CD4-positive, alpha-beta memory T cell (primary cell): ENCODE measurements at regions of chr7 and their contacts with region 1.

Region 1: GRCh38 chr7:137898839-137899721 is 52.3 kb upstream of the DGKI start:
- DNase-seq: peak; percentile 58 to 74 (median 62)
- H3K4me3 ChIP-seq: no peak overlapping the region
- H3K4me3 Mint-ChIP-seq: peak overlapping the region in 7 of 8 donors; percentile 8 to 66 (median 43)
- H3K27ac ChIP-seq: no peak overlapping the region
- H3K27ac Mint-ChIP-seq: peak overlapping the region; percentile 36 to 81 (median 70)
- H3K4me1 ChIP-seq: peaks cover 9% of the 10 kb centered on the region
- H3K4me1 Mint-ChIP-seq: peaks cover 10 to 21% (median 17%) of the 10 kb centered on the region in 4 donors
- H3K27me3 ChIP-seq: no peaks in the 10 kb centered on the region
- H3K27me3 Mint-ChIP-seq: no peaks in the 10 kb centered on the region

Region 2: DNA sequence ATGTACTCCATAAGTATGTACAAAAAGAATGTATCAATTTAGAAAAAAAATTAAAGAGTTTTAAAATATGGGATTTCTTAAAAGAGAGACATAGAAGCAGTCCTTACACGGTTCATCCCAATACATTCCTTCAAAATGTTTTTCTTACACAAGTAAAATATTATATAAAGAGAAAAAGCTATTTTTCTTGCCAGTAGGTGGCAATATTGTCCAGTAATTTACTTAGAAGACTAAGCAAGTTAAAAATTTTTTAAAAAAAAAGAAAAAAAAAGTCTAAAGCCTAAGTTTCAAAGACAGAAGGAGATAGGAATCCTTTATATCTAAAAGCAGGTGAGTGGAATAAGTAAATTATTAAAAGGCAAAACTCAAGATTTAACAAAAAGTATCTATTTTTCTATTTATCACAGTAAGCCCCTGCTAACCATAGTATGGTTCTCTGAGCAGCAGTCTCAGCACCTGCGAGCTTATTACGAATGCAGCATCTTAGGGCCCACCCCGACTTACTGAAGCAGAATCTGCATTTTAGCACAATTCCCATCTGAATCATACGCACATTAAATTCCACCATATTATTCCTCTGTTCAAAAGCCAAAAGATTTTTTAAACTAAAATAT is 292.9 kb before region 1 on chr7:
- CTCF ChIA-PET with region 1: interaction called, 4 read pairs
- POLR2A ChIA-PET with region 1: no interaction called
- intact Hi-C with region 1: loop called (anchors 1 kb)
- DNase-seq: peak in 4 of 5 donors; percentile 7 to 11 (median 8)
- H3K4me3 ChIP-seq: no peak overlapping the region
- H3K4me3 Mint-ChIP-seq: no peak overlapping the region
- H3K27ac ChIP-seq: no peak overlapping the region
- H3K27ac Mint-ChIP-seq: no peak overlapping the region
- H3K4me1 ChIP-seq: no peaks in the 10 kb centered on the region
- H3K4me1 Mint-ChIP-seq: no peaks in the 10 kb centered on the region
- H3K27me3 ChIP-seq: no peaks in the 10 kb centered on the region
- H3K27me3 Mint-ChIP-seq: peaks cover 5% of the 10 kb centered on the region in 2 donors

Region 3: DNA sequence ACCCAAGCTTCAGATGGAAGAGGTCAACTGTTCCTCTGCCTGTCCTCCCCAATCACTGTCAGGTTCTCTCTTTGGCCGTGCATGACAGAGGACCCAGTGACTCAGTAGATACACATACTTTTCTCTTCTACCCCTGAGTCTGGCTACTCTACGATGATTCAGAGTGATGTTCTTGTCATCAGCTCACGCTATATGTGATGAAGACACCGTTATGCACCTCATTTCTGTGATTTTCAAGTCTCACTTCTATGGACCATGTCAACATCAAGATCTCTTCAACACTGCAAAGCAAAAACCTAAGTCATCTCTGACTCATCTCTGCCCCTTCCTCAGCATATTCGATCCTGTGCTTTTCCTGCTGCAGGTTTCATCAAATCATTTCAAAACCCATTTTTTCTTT is 24.3 kb after region 1 on chr7:
- CTCF ChIA-PET with region 1: interaction called, 19 read pairs
- POLR2A ChIA-PET with region 1: no interaction called
- intact Hi-C with region 1: no loop called
- DNase-seq: no peak
- H3K4me3 ChIP-seq: no peak overlapping the region
- H3K4me3 Mint-ChIP-seq: no peak overlapping the region
- H3K27ac ChIP-seq: no peak overlapping the region
- H3K27ac Mint-ChIP-seq: peak overlapping the region in 4 of 7 donors; percentile 1 to 39 (median 16)
- H3K4me1 ChIP-seq: peaks cover 21% of the 10 kb centered on the region
- H3K4me1 Mint-ChIP-seq: peaks cover 24 to 57% (median 35%) of the 10 kb centered on the region in 4 donors
- H3K27me3 ChIP-seq: no peaks in the 10 kb centered on the region
- H3K27me3 Mint-ChIP-seq: no peaks in the 10 kb centered on the region

Region 4: DNA sequence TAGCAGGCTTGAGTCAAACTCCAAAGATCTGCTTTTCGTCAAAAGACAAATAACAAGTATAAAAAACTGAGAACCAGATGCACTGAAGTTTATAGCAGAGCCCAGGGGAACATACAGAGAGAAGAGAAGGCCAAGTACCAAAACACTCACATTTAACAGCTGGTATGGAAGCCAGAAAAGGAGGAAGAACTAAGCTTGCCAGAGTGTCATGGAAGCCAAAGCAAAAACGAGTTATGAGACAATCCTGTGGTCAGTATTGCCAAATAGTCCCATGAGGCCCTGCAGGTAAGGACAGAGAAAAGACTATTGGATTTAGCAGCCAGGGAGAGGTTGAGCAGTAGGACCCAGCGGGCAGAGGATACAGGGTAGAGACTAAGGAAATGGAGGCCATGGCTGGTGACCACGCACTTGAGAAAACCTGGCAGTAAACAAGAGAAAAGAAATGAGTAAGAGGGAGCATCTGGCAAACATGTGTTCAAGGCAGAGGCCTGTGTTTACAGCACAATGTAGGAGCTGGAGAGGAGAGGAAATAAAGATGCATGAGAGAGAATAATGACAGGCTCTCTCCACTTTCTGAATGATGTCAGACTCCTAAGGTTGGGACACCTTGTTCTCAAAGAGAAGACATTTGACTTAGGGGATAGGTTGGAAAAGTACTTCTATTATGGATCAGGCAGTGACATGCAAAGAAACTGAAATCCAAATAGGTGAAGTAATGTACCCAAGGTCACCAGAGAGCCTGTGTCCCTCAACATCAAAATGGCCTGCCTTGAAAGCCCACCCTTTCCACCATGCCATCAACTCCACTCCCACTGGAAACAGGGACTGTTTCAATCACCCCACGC is 93.7 kb after region 1 on chr7:
- CTCF ChIA-PET with region 1: interaction called, 594 read pairs
- POLR2A ChIA-PET with region 1: no interaction called
- intact Hi-C with region 1: no loop called
- DNase-seq: no peak
- H3K4me3 ChIP-seq: no peak overlapping the region
- H3K4me3 Mint-ChIP-seq: peak overlapping the region in 6 of 8 donors; percentile 13 to 77 (median 46)
- H3K27ac ChIP-seq: no peak overlapping the region
- H3K27ac Mint-ChIP-seq: peak overlapping the region in 5 of 7 donors; percentile 5 to 54 (median 31)
- H3K4me1 ChIP-seq: peaks cover 28% of the 10 kb centered on the region
- H3K4me1 Mint-ChIP-seq: peaks cover 24 to 48% (median 36%) of the 10 kb centered on the region in 4 donors
- H3K27me3 ChIP-seq: no peaks in the 10 kb centered on the region
- H3K27me3 Mint-ChIP-seq: no peaks in the 10 kb centered on the region

Region 5: DNA sequence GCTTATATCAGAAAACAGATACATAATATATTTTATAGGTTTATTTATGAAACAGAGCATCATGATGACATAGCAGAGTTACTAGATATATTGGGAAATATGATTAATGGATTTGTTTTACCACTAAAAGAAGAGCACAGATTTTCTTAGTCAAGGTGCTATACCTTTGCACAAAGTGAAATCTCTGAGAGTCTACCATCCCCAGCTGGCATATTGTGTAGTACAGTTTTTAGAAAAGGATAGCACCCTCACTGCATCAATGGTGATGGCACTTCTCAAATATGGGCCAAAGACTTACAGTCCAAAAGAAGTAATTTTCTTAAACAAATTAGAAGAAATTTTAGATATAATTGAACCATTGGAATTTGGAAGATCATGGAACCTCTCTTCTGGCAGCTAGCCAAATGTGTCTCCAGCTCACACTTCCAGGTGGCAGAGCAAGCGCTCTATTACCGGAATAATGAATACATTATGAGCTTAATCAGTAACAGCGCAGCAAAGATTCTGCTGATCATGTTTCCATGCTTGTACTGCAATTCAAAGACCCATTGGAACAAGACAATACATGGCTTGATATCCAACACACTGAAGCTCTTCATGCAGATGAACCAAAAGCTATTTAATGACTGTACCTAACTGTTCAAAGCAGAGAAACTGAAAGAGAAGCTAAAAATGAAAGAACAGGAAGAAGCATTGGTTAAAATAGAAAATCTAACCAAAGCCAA is 124.7 kb after region 1 on chr7:
- CTCF ChIA-PET with region 1: interaction called, 108 read pairs
- POLR2A ChIA-PET with region 1: no interaction called
- intact Hi-C with region 1: no loop called
- DNase-seq: no peak
- H3K4me3 ChIP-seq: no peak overlapping the region
- H3K4me3 Mint-ChIP-seq: no peak overlapping the region
- H3K27ac ChIP-seq: no peak overlapping the region
- H3K27ac Mint-ChIP-seq: no peak overlapping the region
- H3K4me1 ChIP-seq: no peaks in the 10 kb centered on the region
- H3K4me1 Mint-ChIP-seq: peaks cover 0 to 2% (median 0%) of the 10 kb centered on the region in 4 donors
- H3K27me3 ChIP-seq: no peaks in the 10 kb centered on the region
- H3K27me3 Mint-ChIP-seq: peaks cover 0 to 4% of the 10 kb centered on the region in 2 donors

Region 6: DNA sequence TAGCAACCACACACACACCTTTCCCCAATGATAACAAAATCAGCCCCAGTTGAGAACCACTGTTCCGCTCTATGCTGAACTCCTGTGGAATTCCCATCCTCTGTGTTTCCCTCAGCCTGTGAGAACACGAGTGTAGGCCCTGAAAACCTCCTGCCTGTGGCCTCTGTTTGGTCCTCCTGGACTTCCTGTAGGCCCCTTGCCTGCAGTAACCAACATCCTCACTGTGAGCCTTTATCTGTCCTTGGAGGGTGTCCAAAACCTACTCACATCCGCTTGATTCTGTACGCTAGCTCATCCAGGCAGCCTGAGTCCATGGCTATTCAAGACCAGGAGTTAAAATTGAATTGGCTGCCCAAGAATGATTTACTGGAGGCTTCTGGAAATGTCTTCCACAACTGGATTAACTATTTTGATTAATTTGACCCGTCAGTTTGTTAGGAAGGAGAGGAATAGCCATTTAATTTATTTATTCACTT is 327.0 kb after region 1 on chr7:
- CTCF ChIA-PET with region 1: no interaction called
- POLR2A ChIA-PET with region 1: no interaction called
- intact Hi-C with region 1: no loop called
- DNase-seq: no peak
- H3K4me3 ChIP-seq: no peak overlapping the region
- H3K4me3 Mint-ChIP-seq: no peak overlapping the region
- H3K27ac ChIP-seq: no peak overlapping the region
- H3K27ac Mint-ChIP-seq: no peak overlapping the region
- H3K4me1 ChIP-seq: no peaks in the 10 kb centered on the region
- H3K4me1 Mint-ChIP-seq: no peaks in the 10 kb centered on the region
- H3K27me3 ChIP-seq: no peaks in the 10 kb centered on the region
- H3K27me3 Mint-ChIP-seq: peaks cover under 1 to 2% of the 10 kb centered on the region in 2 donors

Region 7: GRCh38 chr7:138865843-138866242 is 966.8 kb after region 1 on chr7:
- CTCF ChIA-PET with region 1: no interaction called
- POLR2A ChIA-PET with region 1: no interaction called
- intact Hi-C with region 1: loop called (anchors 10 kb)
- DNase-seq: peak; percentile 36 to 56 (median 42)
- H3K4me3 ChIP-seq: no peak overlapping the region
- H3K4me3 Mint-ChIP-seq: no peak overlapping the region
- H3K27ac ChIP-seq: no peak overlapping the region
- H3K27ac Mint-ChIP-seq: peak overlapping the region in 3 of 7 donors; percentile 40 to 81 (median 55)
- H3K4me1 ChIP-seq: no peaks in the 10 kb centered on the region
- H3K4me1 Mint-ChIP-seq: peaks cover 0 to 5% (median 3%) of the 10 kb centered on the region in 4 donors
- H3K27me3 ChIP-seq: no peaks in the 10 kb centered on the region
- H3K27me3 Mint-ChIP-seq: peaks cover 0 to 4% of the 10 kb centered on the region in 2 donors